Right lobe of liver (tissue), 6 donors: ENCODE measurements at regions of chr7 and their contacts with region 1.

Region 1: DNA sequence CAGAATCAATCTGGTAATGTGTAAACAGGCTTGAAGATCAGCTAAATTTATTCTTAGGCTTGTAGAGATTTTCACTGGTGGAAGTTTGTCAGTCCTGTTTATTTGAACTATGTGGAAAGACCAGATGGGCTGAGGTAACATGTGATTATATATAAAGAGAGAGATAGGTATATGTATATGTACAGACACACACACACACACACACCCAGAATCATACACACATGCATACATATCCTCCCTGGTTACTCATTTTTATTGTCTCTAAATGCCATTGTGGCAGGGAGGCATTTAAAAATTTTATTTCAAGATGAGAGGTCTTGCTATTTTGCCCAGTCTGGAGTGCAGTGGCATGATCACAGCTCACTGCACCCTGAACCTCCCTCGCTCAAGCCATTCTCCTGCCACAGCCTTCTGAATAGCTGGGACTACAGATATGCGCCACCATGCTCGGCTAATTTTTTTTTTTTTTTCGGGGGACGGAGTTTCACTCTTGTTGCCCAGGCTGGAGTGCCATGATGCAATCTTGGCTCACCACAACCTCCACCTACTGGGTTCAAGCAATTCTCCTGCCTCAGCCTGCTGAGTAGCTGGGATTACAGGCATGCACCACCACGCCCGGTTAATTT is 78.1 kb upstream of the CYTH3 start:
- DNase-seq: peak in 1 of 3 donors; percentile 48
- ATAC-seq: no peak
- H3K4me3 ChIP-seq: no peak overlapping the region
- H3K27ac ChIP-seq: no peak overlapping the region
- H3K4me1 ChIP-seq: peaks cover 0 to 3% (median 0%) of the 10 kb centered on the region in 4 donors
- H3K27me3 ChIP-seq: no peaks in the 10 kb centered on the region
- CTCF ChIP-seq: no peak
- POLR2A ChIP-seq: no peak

Region 2: GRCh38 chr7:6435486-6436384 is 85.2 kb after region 1 on chr7:
- intact Hi-C with region 1: loop called in 1 of 2 experiments (anchors 10 kb)
- DNase-seq: peak; percentile 78 to 83 (median 81)
- ATAC-seq: peak; percentile 88 to 92 (median 90)
- H3K4me3 ChIP-seq: no peak overlapping the region
- H3K27ac ChIP-seq: peak overlapping the region; percentile 20 to 38 (median 25)
- H3K4me1 ChIP-seq: peaks cover 0 to 4% (median 1%) of the 10 kb centered on the region in 4 donors
- H3K27me3 ChIP-seq: no peaks in the 10 kb centered on the region
- CTCF ChIP-seq: peak; percentile 81 to 99 (median 96)
- POLR2A ChIP-seq: no peak